Heart right ventricle (tissue), 16 donors: ENCODE measurements at regions of chr4 and their contacts with region 1.

Region 1: GRCh38 chr4:56544573-56545131 is 39.1 kb downstream of the ARL9 start:
- DNase-seq: peak; percentile 80 to 88
- ATAC-seq: peak; percentile 96 to 100 (median 99)
- H3K4me3 ChIP-seq: peak overlapping the region in 9 of 10 donors; percentile 18 to 47 (median 43)
- H3K27ac ChIP-seq: no peak overlapping the region
- H3K4me1 ChIP-seq: peaks cover 0 to 5% (median 0%) of the 10 kb centered on the region in 9 donors
- H3K27me3 ChIP-seq: peaks cover 0 to 18% (median 0%) of the 10 kb centered on the region in 7 donors
- CTCF ChIP-seq: peak; percentile 93 to 100 (median 99)

Region 2: GRCh38 chr4:56301181-56302076 is 243.2 kb before region 1 on chr4:
- intact Hi-C with region 1: no loop called
- DNase-seq: peak; percentile 59 to 77
- ATAC-seq: peak; percentile 87 to 94 (median 90)
- H3K4me3 ChIP-seq: peak overlapping the region in 1 of 10 donors; percentile 0
- H3K27ac ChIP-seq: no peak overlapping the region
- H3K4me1 ChIP-seq: peaks cover 0 to 12% (median 0%) of the 10 kb centered on the region in 9 donors
- H3K27me3 ChIP-seq: peaks cover 0 to 14% (median 0%) of the 10 kb centered on the region in 7 donors
- CTCF ChIP-seq: peak; percentile 59 to 90 (median 82)

Region 3: GRCh38 chr4:56505269-56506130 is 39.2 kb before region 1 on chr4 and contains the start of gene ARL9:
- intact Hi-C with region 1: loop called in 1 of 10 experiments (anchors 5 kb)
- DNase-seq: peak; percentile 10 to 38
- ATAC-seq: peak; percentile 63 to 80 (median 77)
- H3K4me3 ChIP-seq: peak within 1 kb of the TSS; percentile 38 to 72 (median 56)
- H3K27ac ChIP-seq: peak within 1 kb of the TSS in 5 of 10 donors; percentile 3 to 43 (median 21)
- H3K4me1 ChIP-seq: peaks cover 0 to 18% (median 13%) of the 10 kb centered on the region in 9 donors
- H3K27me3 ChIP-seq: peaks cover 0 to 18% (median 8%) of the 10 kb centered on the region in 7 donors
- CTCF ChIP-seq: no peak
- total RNA-seq, gene ARL9: 0.19 TPM in 1 of 10 donors, not detected in the others